AG04449 (cell line): ENCODE measurements at regions of chr4 and their contacts with region 1.

Region 1: GRCh38 chr4:16196478-16197393 is 29.5 kb downstream of the TAPT1 start:
- DNase-seq: no peak
- H3K4me3 ChIP-seq: no peak overlapping the region
- CTCF ChIP-seq: peak; percentile 29

Region 2: GRCh38 chr4:16026160-16026761 is 170.5 kb before region 1 on chr4:
- CTCF ChIA-PET with region 1: interaction called, 114 read pairs
- POLR2A ChIA-PET with region 1: no interaction called
- DNase-seq: no peak
- H3K4me3 ChIP-seq: no peak overlapping the region
- CTCF ChIP-seq: peak; percentile 43

Region 3: DNA sequence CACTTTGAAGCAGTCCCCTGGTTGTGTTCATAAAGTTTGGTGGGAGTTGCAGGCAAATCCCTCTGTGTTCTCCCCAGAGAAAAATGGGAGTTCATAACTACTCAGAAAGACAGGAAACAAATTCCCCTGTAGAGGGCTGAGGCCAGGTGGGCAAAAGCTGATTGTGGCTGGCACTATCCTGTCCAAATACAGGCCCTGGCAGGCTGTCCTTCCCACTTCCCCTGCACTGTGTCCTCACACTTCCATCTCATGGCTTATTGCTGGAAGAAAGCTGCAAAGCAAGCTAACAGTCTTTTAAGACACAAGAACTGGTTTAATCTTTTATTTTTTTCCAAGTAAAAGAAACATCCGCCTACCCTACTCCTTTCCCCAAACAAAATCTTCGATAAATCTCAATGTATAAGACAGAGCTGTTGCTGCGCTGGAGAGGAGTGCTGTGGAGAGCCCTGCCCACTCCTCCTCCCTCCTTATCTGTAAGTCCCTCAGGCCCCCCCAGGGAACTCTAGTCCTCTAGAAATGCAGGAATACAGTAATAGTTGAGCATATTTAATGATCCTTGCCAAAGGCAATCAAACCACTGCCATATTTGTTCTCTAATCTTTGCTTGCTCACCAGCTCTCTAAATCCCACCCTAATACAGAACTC is 15.5 kb after region 1 on chr4:
- CTCF ChIA-PET with region 1: interaction called, 34 read pairs
- POLR2A ChIA-PET with region 1: no interaction called
- DNase-seq: no peak
- H3K4me3 ChIP-seq: no peak overlapping the region
- CTCF ChIP-seq: no peak